Pancreas (tissue), 10 donors: ENCODE measurements at regions of chr1 and their contacts with region 1.

Region 1: DNA sequence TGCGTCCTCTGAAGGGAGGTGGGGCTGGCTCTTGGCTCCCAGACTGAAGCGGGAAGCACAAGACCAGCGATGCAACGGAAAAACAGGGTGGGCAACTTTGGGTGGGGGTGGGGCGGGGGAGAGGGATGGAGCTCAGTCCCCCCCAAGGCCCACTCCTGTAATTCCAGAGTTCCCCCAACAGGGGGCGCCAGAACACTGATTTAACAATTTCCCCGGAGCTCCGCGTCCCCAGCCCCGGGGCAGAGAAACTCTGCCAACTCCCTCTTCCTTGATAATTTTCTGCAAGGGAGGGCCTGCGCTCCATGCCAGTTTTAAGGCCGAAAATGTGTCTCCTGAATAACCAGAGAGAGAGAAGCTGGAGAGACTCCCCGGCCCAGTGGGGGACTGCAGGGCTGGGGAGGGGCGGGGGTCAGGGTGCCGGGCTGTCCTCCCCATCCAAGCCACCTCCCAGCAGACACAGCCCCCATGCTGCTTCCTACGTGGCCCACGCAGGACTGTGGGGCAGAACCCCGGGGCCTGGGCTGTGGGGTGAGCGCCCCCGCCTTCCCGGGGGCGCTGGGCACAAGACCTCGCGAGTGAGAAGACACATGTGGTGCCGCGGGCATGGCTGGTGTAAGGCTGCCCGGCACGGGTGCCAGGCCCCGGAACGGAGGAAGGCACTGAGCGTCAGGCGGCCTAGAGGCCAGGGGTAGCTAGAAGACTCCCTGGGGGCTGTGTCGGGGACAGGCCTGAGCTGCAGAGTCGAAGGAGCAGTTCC is 51.4 kb downstream of the KIF21B start:
- DNase-seq: peak; percentile 37 to 86 (median 74)
- ATAC-seq: peak; percentile 75 to 89 (median 76)
- H3K4me3 ChIP-seq: no peak overlapping the region
- H3K27ac ChIP-seq: no peak overlapping the region
- H3K4me1 ChIP-seq: no peaks in the 10 kb centered on the region
- H3K27me3 ChIP-seq: no peaks in the 10 kb centered on the region
- CTCF ChIP-seq: peak; percentile 93 to 98 (median 96)

Region 2: DNA sequence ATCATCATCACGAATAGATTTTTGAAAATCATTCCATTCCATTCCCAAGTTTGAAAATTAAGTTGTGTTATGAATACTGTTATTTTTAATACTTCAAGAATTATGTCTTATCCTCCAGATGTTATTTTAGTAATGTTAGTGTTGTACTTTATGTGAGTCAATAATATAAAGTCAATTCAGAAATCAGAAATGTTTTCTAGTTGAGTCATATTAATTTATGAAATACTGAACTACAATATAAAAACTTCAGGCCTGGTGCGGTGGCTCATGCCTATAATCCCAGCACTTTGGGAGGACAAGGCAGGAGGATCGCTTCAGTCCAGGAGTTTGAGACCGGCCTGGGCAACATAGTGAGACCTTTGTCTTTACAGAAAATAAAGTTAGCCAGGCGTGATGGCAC is 137.8 kb before region 1 on chr1:
- intact Hi-C with region 1: no loop called
- DNase-seq: no peak
- ATAC-seq: no peak
- H3K4me3 ChIP-seq: no peak overlapping the region
- H3K27ac ChIP-seq: no peak overlapping the region
- H3K4me1 ChIP-seq: peaks cover 0 to 6% (median 3%) of the 10 kb centered on the region in 3 donors
- H3K27me3 ChIP-seq: no peaks in the 10 kb centered on the region
- CTCF ChIP-seq: no peak

Region 3: GRCh38 chr1:201042779-201043461 is 70.8 kb after region 1 on chr1:
- intact Hi-C with region 1: loop called in 2 of 3 experiments (anchors 2 to 5 kb)
- DNase-seq: peak in 4 of 6 donors; percentile 47 to 76 (median 74)
- ATAC-seq: peak; percentile 75 to 95 (median 90)
- H3K4me3 ChIP-seq: no peak overlapping the region
- H3K27ac ChIP-seq: no peak overlapping the region
- H3K4me1 ChIP-seq: no peaks in the 10 kb centered on the region
- H3K27me3 ChIP-seq: no peaks in the 10 kb centered on the region
- CTCF ChIP-seq: peak; percentile 53 to 79 (median 74)

Region 4: DNA sequence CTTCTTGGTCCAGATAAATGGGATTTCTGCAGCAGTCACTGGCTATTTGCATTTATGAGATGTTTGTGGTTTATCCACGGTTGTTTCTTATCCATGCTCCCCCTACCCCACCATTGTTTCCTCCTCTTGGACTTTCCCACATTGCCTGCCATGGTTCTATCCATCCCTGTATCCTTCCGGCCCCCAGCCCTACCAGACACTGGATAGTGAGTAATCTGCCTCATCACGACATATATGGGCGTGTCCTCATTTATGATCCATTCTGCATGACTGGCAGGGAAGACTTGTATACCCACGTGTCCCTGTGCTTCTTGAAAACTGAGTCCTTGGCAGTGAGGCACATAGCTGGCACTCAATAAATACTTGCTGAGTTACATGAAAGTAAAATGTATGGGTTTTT is 100.0 kb after region 1 on chr1:
- intact Hi-C with region 1: no loop called
- DNase-seq: no peak
- ATAC-seq: no peak
- H3K4me3 ChIP-seq: no peak overlapping the region
- H3K27ac ChIP-seq: no peak overlapping the region
- H3K4me1 ChIP-seq: no peaks in the 10 kb centered on the region
- H3K27me3 ChIP-seq: no peaks in the 10 kb centered on the region
- CTCF ChIP-seq: no peak

Region 5: DNA sequence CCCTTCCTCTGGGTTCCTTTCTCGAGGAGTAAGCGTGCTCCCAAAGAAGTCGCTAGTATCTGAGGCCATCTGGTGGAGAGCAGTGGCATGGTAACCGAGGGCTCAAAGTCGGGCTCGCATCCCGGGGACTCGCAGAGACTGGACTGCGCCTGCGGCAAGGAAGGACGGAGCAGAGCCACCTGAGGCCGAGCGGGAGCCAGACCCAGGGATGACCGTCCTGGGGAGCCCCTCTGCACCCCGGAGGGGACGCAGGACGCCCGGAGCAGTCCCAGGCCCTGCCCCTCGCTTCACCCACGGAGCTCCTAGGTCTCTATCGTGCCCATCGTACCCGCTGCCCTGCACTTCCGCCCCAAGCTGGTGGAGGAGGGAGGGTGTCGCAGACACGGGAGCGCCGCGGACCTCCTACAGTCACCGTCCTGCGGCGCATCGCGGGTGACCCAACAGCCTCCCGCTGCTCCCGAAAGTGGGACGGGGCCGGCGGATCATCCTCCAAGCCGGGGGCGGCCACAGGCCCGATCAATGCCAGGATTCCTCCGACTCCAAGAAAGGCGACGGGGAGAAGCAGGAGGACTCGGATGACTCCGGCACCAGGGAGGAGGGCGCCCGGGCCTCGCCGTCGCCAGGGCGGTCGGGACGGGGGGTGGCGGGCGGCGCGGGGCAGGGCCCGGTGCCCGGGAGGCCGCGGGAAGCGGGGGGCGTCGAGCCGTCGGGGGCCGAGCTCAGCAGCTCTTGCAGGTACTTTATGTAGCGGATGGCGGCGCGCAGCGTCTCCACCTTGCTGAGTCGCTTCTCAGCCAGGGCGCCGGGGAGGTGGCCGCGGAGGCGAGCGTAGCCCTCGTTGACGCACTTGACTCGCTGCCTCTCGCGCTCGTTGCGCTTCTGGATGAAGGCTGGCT is 142.4 kb after region 1 on chr1:
- intact Hi-C with region 1: loop called in 2 of 3 experiments (anchors 5 to 10 kb)
- DNase-seq: peak; percentile 88 to 96 (median 92)
- ATAC-seq: peak; percentile 94 to 98 (median 98)
- H3K4me3 ChIP-seq: peak overlapping the region; percentile 31 to 74 (median 58)
- H3K27ac ChIP-seq: peak overlapping the region in 3 of 4 donors; percentile 56 to 82 (median 72)
- H3K4me1 ChIP-seq: peaks cover 0 to 6% (median 2%) of the 10 kb centered on the region in 3 donors
- H3K27me3 ChIP-seq: no peaks in the 10 kb centered on the region
- CTCF ChIP-seq: peak; percentile 67 to 75 (median 72)

Region 6: DNA sequence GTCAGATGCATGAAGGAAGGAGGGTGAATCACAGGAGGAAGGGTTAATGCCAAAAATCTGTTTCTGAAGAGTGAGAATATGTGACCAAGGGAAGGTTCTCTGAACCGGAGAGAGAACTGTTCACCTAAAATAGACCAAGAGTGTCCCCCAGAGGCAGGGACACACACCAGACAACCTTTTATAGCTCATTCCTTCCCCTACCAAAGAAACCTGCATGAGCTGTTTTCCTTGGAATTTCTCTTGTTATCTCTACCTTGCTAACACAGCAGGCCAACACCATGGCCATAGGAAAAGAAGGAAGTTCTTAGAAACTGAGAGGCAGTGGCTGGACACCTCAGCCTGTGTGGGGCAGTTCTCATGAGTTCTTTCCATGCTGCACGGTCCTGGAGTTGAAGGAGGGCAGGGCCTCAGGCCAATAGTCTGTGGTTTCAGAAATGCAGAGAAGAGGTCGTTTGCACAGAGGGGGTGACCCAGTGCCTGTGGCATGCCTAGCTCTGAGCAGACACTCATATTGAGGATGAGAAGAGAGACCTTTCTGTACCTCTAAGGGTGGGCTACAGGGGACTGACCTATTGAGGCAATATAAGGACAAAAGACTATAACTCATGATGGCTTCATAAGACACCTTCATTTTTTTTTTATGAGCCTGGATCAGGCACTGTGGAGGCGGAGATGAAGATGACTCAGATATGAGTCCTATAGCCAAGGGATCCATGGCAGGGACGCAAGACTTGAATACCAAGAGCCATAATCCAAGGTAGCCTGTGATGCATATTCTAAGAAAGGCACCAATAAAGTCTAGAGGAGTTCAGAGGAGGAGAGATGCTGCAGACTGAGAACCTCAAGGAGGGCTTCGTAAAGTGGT is 257.9 kb after region 1 on chr1:
- intact Hi-C with region 1: loop called in 1 of 3 experiments (anchors 10 kb)
- DNase-seq: no peak
- ATAC-seq: no peak
- H3K4me3 ChIP-seq: no peak overlapping the region
- H3K27ac ChIP-seq: no peak overlapping the region
- H3K4me1 ChIP-seq: no peaks in the 10 kb centered on the region
- H3K27me3 ChIP-seq: no peaks in the 10 kb centered on the region
- CTCF ChIP-seq: no peak